ENCODE measurements at regions of chr1 and their contacts with region 1.

Region 1: DNA sequence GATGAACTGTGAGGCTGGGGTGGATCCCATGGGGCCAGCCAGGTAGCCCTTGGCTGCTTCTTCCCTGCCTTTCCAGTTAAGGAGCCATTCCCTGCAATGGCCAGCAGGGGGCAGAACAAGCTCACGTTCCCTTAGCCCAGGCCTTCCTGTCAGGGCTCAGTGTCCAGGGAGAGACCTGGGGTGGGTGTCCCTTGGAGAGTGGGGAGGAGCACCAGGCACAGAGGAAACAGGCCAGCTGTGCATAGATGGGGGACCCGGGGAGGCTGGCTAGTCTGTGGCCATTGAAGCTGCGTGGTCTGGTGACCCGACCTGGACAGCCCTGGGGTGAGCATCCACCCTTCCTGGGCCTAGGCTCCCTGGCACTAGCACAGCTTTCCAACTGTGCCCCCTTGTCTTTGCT is 13.2 kb upstream of the EPS8L3 start:
- DNase-seq: peak; percentile 67
- H3K4me3 ChIP-seq: no peak overlapping the region
- CTCF ChIP-seq: peak; percentile 94

Region 2: DNA sequence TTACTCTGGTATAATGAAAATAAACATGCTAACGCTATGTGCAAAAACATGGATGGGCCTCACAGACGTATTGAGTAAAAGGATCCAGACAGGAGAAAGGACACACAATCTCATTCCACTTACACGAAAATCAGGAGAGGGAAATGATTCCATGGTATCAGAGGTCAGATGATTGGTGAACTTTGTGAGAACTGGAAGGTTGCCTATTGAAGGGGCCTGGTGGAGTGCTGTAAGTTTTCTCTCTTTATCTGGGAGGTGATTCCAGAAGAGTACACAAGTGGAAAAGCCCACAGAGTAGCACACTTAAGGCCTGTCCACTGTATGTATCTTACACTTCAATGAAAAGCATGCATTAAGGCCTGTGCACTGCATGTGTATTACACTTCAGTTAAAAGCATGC is 99.5 kb before region 1 on chr1:
- in situ Hi-C with region 1: no loop called
- DNase-seq: no peak
- H3K4me3 ChIP-seq: no peak overlapping the region
- CTCF ChIP-seq: no peak

Region 3: GRCh38 chr1:109910123-109910962 is 133.4 kb after region 1 on chr1 and contains the start of gene CSF1:
- in situ Hi-C with region 1: loop called (anchors 25 kb)
- DNase-seq: peak; percentile 71
- H3K4me3 ChIP-seq: peak within 1 kb of the TSS; percentile 96
- CTCF ChIP-seq: no peak

Region 4: GRCh38 chr1:110011527-110012041 is 234.7 kb after region 1 on chr1:
- in situ Hi-C with region 1: loop called (anchors 25 kb)
- DNase-seq: peak; percentile 48
- H3K4me3 ChIP-seq: no peak overlapping the region
- CTCF ChIP-seq: peak; percentile 68